ENCODE measurements at regions of chr3 and their contacts with region 1.

Region 1: GRCh38 chr3:141894524-141895178 is 18.2 kb downstream of the ATP1B3 start:
- DNase-seq: peak; percentile 81
- H3K4me3 ChIP-seq: no peak overlapping the region
- H3K27ac ChIP-seq: no peak overlapping the region
- H3K4me1 ChIP-seq: peaks cover 9% of the 10 kb centered on the region
- H3K27me3 ChIP-seq: no peaks in the 10 kb centered on the region
- CTCF ChIP-seq: no peak

Region 2: GRCh38 chr3:141863491-141863890 is 31.2 kb before region 1 on chr3:
- CTCF ChIA-PET with region 1: no interaction called
- dilution Hi-C with region 1: no loop called
- in situ Hi-C with region 1: no loop called
- intact Hi-C with region 1: no loop called
- DNase-seq: no peak
- H3K4me3 ChIP-seq: no peak overlapping the region
- H3K27ac ChIP-seq: no peak overlapping the region
- H3K4me1 ChIP-seq: no peaks in the 10 kb centered on the region
- H3K27me3 ChIP-seq: no peaks in the 10 kb centered on the region
- CTCF ChIP-seq: no peak

Region 3: DNA sequence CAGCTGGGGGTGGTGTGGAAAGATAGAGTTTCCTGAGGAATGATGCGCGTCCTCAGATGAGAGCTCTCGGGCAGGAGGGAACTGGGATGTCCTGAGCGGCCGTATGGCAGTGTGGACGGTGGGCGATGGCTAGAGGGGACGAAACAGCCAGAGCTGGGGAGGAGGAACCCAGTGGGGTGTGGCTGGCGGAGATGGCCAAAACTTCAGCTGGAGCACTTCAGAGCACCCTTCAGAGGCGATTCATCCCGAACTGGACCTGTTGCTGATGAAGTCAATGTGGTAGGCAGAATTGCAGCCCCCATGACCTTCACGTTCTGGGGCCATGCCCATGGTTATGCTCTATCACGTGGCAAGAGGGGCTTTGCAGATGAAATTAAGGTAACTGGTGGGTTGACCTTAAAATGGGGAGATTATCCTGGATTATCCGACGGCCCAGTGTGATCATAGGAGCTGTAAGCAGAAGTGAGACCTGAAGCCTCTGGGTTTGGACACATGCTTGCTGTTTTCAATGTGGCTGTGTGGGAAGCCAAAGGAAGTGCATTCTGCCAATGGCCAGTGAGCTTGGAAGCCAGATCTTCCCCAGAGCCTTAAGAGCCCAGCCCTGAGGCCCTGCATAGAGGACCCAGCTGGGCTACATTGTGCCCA is 34.1 kb after region 1 on chr3:
- CTCF ChIA-PET with region 1: no interaction called
- dilution Hi-C with region 1: loop called (anchors 5 kb)
- in situ Hi-C with region 1: no loop called
- intact Hi-C with region 1: no loop called
- DNase-seq: no peak
- H3K4me3 ChIP-seq: no peak overlapping the region
- H3K27ac ChIP-seq: no peak overlapping the region
- H3K4me1 ChIP-seq: no peaks in the 10 kb centered on the region
- H3K27me3 ChIP-seq: no peaks in the 10 kb centered on the region
- CTCF ChIP-seq: no peak

Measured in mammary epithelial cell (primary cell).